Activated naive CD8-positive, alpha-beta T cell treated with anti-CD3 and anti-CD28 coated beads, Interleukin-2, amount 10 ng/mL, durations not matched to agents 7 days and 5 days (primary cell): ENCODE measurements at regions of chr10 and their contacts with region 1.

Region 1: GRCh38 chr10:28334296-28334695 is 31.4 kb upstream of the MPP7 start:
- DNase-seq: no peak
- ATAC-seq: peak; percentile 57
- H3K4me3 Mint-ChIP-seq: peak overlapping the region; percentile 77
- H3K27ac Mint-ChIP-seq: peak overlapping the region; percentile 90
- H3K4me1 Mint-ChIP-seq: peaks cover 44% of the 10 kb centered on the region
- H3K27me3 Mint-ChIP-seq: no peaks in the 10 kb centered on the region

Region 2: GRCh38 chr10:28200804-28201203 is 133.5 kb before region 1 on chr10:
- POLR2A ChIA-PET with region 1: no interaction called
- DNase-seq: no peak
- ATAC-seq: no peak
- H3K4me3 Mint-ChIP-seq: no peak overlapping the region
- H3K27ac Mint-ChIP-seq: no peak overlapping the region
- H3K4me1 Mint-ChIP-seq: no peaks in the 10 kb centered on the region
- H3K27me3 Mint-ChIP-seq: no peaks in the 10 kb centered on the region

Region 3: DNA sequence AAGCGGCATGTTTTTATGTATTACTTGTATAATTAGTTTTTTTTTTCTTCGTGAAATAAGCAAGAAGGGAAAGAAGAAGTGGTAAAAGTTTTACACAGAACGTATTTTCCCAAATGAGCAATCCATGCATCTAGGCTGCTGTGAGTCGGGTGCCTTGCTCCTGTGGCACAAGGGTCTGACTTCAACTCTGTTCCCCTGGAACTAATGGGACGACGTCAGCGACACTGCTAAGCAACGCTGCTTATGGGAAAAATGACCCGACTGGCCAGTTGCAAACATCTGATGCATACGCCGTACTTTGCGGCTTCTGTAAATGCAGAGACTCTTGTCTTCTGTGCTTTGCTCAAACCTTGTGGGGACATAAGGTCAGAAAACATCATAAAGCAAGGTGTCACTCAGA is 97.7 kb before region 1 on chr10:
- POLR2A ChIA-PET with region 1: no interaction called
- DNase-seq: no peak
- ATAC-seq: no peak
- H3K4me3 Mint-ChIP-seq: no peak overlapping the region
- H3K27ac Mint-ChIP-seq: no peak overlapping the region
- H3K4me1 Mint-ChIP-seq: peaks cover 5% of the 10 kb centered on the region
- H3K27me3 Mint-ChIP-seq: no peaks in the 10 kb centered on the region

Region 4: GRCh38 chr10:28302638-28303488 is 31.4 kb before region 1 on chr10 and contains the start of gene MPP7:
- POLR2A ChIA-PET with region 1: interaction called, 105 read pairs
- DNase-seq: peak; percentile 97
- ATAC-seq: peak; percentile 97
- H3K4me3 Mint-ChIP-seq: peak within 1 kb of the TSS; percentile 91
- H3K27ac Mint-ChIP-seq: peak within 1 kb of the TSS; percentile 72
- H3K4me1 Mint-ChIP-seq: peaks cover 35% of the 10 kb centered on the region
- H3K27me3 Mint-ChIP-seq: peaks cover 16% of the 10 kb centered on the region
- total RNA-seq, gene MPP7: 23.4 to 24.2 TPM

Region 5: GRCh38 chr10:28367929-28368484 is 33.7 kb after region 1 on chr10:
- POLR2A ChIA-PET with region 1: interaction called, 235 read pairs
- DNase-seq: peak; percentile 51
- ATAC-seq: peak; percentile 94
- H3K4me3 Mint-ChIP-seq: peak overlapping the region; percentile 81
- H3K27ac Mint-ChIP-seq: peak overlapping the region; percentile 98
- H3K4me1 Mint-ChIP-seq: peaks cover 40% of the 10 kb centered on the region
- H3K27me3 Mint-ChIP-seq: no peaks in the 10 kb centered on the region

Region 6: GRCh38 chr10:28381903-28382347 is 47.6 kb after region 1 on chr10:
- POLR2A ChIA-PET with region 1: interaction called, 67 read pairs
- DNase-seq: peak; percentile 73
- ATAC-seq: peak; percentile 94
- H3K4me3 Mint-ChIP-seq: peak overlapping the region; percentile 17
- H3K27ac Mint-ChIP-seq: no peak overlapping the region
- H3K4me1 Mint-ChIP-seq: peaks cover 27% of the 10 kb centered on the region
- H3K27me3 Mint-ChIP-seq: peaks cover 8% of the 10 kb centered on the region